Right ventricle myocardium superior (tissue), 1 donor: ENCODE measurements at regions of chr2 and their contacts with region 1.

Region 1: DNA sequence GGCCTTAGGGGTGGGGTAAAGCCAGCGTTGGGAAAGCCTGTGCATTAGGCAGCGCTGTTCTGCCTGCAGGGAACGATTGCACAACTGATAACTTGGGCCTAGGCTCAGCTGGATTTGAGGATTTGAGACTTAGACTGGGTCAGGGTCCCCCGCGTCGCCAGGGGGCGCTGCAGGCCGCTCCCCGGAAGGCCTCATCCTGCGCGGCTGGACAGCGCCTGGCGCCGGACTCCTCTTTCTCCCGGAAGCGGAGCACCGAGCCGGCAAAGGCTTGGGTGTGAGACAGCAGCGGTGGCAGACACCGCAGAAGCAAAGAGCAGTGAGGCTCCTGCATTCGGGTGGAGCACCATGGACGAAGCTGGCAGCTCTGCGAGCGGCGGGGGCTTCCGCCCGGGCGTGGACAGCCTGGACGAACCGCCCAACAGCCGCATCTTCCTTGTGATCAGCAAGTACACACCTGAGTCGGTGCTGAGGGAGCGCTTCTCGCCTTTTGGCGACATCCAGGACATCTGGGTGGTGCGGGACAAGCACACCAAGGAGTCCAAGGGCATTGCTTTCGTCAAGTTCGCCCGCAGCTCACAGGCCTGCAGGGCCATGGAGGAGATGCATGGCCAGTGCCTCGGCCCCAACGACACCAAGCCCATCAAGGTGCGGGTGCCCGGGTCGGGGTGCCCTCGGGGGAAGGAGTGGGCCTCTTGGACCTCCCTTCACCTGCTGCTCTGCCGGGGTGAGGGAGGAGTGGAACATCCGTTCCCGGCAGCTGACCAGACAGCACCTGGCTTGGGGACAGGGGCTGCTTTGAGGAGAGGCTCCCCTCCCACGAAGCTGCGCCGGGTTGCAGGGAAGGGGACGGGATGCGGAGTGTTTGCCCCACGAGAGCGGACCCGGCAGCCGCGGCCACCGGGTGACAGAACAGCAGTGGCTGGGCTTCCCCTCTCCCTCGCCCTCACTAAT is at the start of gene RBM45:
- DNase-seq: peak; percentile 97
- ATAC-seq: peak; percentile 99
- total RNA-seq, gene RBM45: 4.9 TPM

Region 2: DNA sequence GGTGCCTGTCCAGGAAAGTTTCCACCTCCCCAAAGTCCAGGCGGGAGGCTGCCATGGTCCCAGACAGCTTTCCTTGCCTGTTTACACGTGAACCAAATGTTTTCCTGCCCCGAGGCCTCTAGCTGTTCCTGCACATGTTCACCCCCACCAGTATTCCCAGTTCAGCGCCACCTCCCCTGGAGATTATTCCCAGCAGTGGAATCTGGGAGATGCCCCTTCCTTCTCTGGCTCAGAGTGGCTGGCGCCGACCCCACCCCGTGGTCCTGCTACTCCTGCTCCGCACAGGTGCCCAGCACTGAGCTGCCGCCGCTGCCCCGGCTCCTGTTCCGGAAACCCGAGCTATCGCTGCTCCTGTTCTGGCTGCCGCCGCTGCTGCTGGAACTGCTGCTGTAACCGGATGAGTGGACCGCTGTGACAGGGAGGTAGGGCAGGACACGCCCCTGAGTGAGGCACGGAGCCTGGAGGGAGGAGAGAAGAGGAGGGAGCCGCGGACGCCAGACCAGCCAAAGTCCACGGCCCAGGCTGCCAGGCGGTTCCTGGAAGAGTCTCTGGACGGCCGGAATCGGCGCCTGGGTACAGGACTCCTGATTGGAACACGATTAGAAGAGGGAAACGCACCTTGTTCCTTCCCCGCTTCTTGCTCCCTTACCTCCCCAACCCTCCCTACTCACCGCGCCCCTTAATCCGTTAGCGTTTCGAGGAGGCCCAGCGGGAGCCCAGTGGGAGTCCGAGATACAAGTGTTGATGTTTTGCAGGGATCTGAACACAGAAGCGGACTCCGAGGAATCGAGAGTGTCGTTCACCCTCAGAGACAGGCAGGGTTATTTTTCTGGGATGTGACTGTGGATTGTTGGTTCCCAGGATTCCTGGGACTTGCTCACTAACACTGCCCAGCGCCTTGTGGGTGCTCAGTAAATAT is 39.8 kb before region 1 on chr2 and contains the start of gene PDE11A:
- intact Hi-C with region 1: no loop called
- DNase-seq: peak; percentile 88
- ATAC-seq: peak; percentile 97
- total RNA-seq, gene PDE11A: 2.2 TPM

Region 3: GRCh38 chr2:178193823-178194599 is 81.5 kb after region 1 on chr2 and contains the start of gene OSBPL6:
- intact Hi-C with region 1: loop called (anchors 10 kb)
- DNase-seq: peak; percentile 90
- ATAC-seq: peak; percentile 98
- total RNA-seq, gene OSBPL6: 3.3 TPM

Region 4: DNA sequence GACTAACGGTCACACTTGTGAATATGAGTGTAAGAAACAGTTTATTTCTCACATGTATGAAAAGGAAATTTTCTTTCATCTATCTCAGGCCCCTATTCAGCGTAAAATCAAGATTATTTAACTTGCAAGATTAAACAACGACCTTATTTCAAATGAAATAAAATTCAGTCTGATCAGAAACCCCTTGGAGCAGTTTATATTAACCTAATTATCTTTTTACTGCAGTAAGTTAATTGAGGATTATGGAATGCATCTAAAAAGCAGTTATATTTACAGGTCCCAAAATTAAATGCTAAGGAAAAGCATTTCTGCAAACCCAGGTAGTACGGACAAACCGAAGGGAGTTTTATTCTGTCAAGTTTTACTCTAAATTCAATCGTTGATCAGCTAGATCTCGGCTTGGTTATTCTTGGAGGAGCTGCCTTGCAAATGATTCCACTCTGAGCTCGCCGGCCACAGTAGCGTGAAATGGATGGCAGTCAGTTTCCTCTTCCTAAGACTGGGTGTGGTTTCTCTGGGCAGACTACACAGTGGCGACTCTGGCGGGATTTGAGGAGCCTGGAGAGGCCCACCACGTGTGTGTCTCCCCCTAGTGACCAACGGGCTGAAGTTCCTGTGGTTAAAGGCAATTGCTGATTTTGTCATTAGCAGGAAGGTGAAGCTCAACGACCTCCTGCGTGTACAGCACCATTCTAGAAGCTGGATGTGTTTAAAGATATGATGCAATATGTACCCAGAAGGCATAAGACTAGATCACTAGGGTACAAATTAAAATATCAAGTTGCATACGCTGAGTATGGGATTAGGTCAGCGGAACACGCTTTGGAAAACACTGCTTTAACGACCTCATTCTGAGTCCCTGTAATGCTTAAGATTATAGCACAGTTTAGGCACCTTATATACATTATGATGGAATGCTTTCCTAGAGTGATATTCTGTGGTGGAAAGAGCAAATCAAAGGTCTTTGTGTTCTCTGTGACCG is 302.1 kb after region 1 on chr2:
- intact Hi-C with region 1: loop called (anchors 5 kb)
- DNase-seq: peak; percentile 91
- ATAC-seq: peak; percentile 98